Heart left ventricle (tissue), 16 donors: ENCODE measurements at regions of chr6 and their contacts with region 1.

Region 1: DNA sequence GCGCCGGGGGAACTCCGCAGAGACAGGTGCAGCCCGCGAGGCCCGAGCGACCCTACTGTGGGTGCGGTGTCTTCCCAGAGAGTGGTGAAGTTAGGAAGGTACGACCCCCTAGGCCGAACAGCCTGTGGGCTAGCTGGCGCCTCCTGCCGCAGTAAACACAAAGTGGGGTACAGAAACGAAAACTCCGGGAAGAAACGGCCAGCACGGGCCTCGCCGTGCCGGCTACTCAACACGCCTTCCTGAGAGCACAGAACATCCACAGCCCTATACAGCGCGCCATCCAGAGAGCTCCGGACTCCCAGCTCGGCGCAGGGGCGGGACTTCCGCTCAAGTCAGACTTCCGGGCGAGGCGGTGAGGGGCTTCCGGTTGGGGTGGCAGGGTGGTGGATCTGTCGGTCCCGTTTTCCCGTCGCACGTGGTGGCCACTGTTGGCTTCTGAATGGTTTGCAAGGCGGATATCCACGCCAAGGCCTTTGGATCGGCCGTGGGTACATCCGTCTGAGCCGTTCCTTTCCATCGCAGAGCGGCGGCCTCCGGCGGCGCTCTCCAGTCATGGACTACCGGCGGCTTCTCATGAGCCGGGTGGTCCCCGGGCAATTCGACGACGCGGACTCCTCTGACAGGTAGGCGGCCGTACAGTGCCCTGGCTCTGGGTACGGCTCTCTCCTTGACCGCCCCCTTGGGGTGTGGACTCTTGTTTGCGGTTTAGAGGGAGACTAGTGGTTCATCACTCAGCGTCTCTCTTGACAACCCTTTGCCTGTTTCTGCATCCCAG is at the starts of genes CAGE1 and RIOK1:
- DNase-seq: peak; percentile 95 to 97 (median 97)
- ATAC-seq: peak; percentile 100
- H3K4me3 ChIP-seq: peak within 1 kb of the TSS; percentile 56 to 96 (median 84)
- H3K27ac ChIP-seq: peak within 1 kb of the TSS; percentile 22 to 97 (median 92)
- H3K4me1 ChIP-seq: peaks cover 0 to 31% (median 18%) of the 10 kb centered on the region in 12 donors
- H3K27me3 ChIP-seq: no peaks in the 10 kb centered on the region
- CTCF ChIP-seq: peak in 6 of 12 donors; percentile 13 to 32 (median 20)
- POLR2A ChIP-seq: peak in 1 of 2 donors; percentile 79
- total RNA-seq, gene CAGE1: 0.54 TPM in 1 of 9 donors, not detected in the others
- total RNA-seq, gene RIOK1: 8.8 to 14.4 (median 9.7) TPM

Region 2: GRCh38 chr6:7058250-7058923 is 331.3 kb before region 1 on chr6:
- intact Hi-C with region 1: no loop called
- DNase-seq: peak in 1 of 5 donors; percentile 41
- ATAC-seq: peak in 3 of 4 donors; percentile 41 to 84 (median 79)
- H3K4me3 ChIP-seq: no peak overlapping the region
- H3K27ac ChIP-seq: no peak overlapping the region
- H3K4me1 ChIP-seq: peaks cover 0 to 7% (median 0%) of the 10 kb centered on the region in 12 donors
- H3K27me3 ChIP-seq: no peaks in the 10 kb centered on the region
- CTCF ChIP-seq: no peak
- POLR2A ChIP-seq: no peak

Region 3: DNA sequence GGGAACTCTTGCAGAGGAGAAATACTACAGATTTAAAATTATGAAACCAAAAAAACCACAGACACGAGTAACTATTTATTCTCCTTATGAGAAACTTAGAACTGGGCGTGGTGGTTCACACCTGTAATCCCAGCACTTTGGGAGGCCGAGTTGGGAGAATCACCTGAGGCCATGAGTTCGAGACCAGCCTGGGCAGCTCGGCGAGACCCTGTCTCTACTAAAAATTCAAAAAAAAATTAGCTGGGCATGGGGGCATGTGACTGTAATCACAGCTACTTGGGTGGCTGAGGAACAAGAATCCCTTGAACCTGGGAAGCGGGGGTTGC is 113.5 kb before region 1 on chr6:
- intact Hi-C with region 1: loop called in 4 of 10 experiments (anchors 5 to 10 kb)
- DNase-seq: no peak
- ATAC-seq: no peak
- H3K4me3 ChIP-seq: no peak overlapping the region
- H3K27ac ChIP-seq: no peak overlapping the region
- H3K4me1 ChIP-seq: peaks cover 0 to 17% (median 0%) of the 10 kb centered on the region in 12 donors
- H3K27me3 ChIP-seq: no peaks in the 10 kb centered on the region
- CTCF ChIP-seq: peak in 1 of 12 donors; percentile 1
- POLR2A ChIP-seq: no peak

Region 4: GRCh38 chr6:7282097-7282906 is 107.3 kb before region 1 on chr6:
- intact Hi-C with region 1: loop called in 4 of 10 experiments (anchors 5 to 10 kb)
- DNase-seq: no peak
- ATAC-seq: no peak
- H3K4me3 ChIP-seq: no peak overlapping the region
- H3K27ac ChIP-seq: peak overlapping the region in 1 of 12 donors; percentile 9
- H3K4me1 ChIP-seq: peaks cover 0 to 20% (median 0%) of the 10 kb centered on the region in 12 donors
- H3K27me3 ChIP-seq: no peaks in the 10 kb centered on the region
- CTCF ChIP-seq: no peak
- POLR2A ChIP-seq: no peak

Region 5: GRCh38 chr6:7292596-7293255 is 96.9 kb before region 1 on chr6:
- intact Hi-C with region 1: loop called in 2 of 10 experiments (anchors 10 kb)
- DNase-seq: no peak
- ATAC-seq: peak in 3 of 4 donors; percentile 62 to 90 (median 64)
- H3K4me3 ChIP-seq: no peak overlapping the region
- H3K27ac ChIP-seq: peak overlapping the region in 11 of 12 donors; percentile 2 to 68 (median 21)
- H3K4me1 ChIP-seq: peaks cover 0 to 7% (median 0%) of the 10 kb centered on the region in 12 donors
- H3K27me3 ChIP-seq: no peaks in the 10 kb centered on the region
- CTCF ChIP-seq: no peak
- POLR2A ChIP-seq: no peak

Region 6: GRCh38 chr6:7312616-7313504 is 76.8 kb before region 1 on chr6 and contains the start of gene SSR1:
- intact Hi-C with region 1: loop called (anchors 1 to 10 kb)
- DNase-seq: peak; percentile 98 to 99 (median 99)
- ATAC-seq: peak; percentile 100
- H3K4me3 ChIP-seq: peak within 1 kb of the TSS; percentile 78 to 100 (median 90)
- H3K27ac ChIP-seq: peak within 1 kb of the TSS; percentile 51 to 97 (median 94)
- H3K4me1 ChIP-seq: peaks cover 0 to 58% (median 21%) of the 10 kb centered on the region in 12 donors
- H3K27me3 ChIP-seq: no peaks in the 10 kb centered on the region
- CTCF ChIP-seq: peak in 1 of 12 donors; percentile 6
- POLR2A ChIP-seq: peak in 1 of 2 donors; percentile 89
- total RNA-seq, gene SSR1: 20.6 to 106 (median 67.9) TPM

Region 7: DNA sequence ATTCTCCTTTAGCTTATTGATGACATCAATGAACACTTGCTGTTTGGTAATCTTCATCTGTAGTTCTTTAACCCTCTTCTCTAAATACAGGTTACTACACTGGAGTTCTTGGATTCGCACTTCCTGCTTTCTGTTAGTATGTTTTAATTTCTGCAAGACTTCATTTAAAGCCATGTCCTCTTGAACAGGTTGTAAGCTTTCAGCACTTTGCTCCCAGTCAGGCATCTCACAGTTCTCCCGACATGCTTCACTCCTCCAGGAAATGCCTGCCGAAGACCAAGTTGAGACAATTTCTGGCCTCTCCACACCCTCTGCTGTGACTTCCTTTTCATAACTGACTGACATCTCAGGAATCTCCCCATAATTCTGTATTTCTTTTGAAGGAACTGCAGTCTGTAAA is 15.9 kb before region 1 on chr6:
- intact Hi-C with region 1: no loop called
- DNase-seq: no peak
- ATAC-seq: no peak
- H3K4me3 ChIP-seq: no peak overlapping the region
- H3K27ac ChIP-seq: no peak overlapping the region
- H3K4me1 ChIP-seq: no peaks in the 10 kb centered on the region
- H3K27me3 ChIP-seq: peaks cover 0 to 6% (median 0%) of the 10 kb centered on the region in 9 donors
- CTCF ChIP-seq: no peak
- POLR2A ChIP-seq: no peak

Region 8: DNA sequence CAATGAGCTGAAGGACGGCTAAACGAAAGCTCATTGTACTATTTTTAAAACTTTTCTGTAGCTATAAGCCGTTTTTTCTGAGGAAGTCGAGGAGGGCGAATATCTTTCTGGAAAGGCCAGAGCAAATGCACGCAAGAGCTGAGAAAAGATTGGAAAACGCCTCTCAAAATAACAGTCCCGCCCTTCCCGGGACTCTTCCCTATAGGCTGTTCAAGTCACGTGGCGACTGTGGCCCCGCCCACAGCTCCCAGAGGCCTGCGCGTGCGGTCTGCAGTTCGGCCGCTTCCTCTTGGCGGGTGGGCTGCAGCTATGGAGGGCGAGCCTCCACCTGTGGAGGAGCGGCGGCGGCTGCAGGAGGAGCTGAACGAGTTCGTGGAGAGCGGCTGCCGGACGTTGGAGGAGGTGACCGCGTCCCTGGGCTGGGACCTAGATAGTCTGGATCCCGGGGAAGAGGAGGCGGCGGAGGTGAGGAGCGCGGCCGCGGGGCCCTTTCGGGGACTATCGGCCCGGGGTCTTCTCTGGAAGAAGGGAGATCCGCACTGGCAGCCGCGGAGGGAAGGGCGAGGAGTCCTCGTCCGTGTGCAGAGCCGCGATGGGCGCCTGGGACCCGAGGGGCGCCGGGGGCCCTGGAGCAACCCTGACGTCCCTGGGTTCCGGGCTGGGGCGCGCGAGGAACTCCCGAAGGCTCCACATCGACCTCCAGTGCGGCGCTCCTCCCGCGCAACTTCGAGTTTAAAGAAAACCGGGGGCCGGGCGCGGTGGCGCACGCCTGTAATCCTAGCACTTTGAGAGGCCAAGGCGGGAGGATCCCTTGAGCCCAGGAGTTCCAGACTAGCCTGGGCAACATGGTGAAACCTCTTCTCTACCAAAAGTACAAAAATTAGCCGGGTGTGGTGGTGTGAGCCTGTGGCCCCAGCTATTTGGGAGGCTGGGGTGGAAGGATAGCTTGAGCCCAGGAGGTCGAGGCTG is 200.6 kb after region 1 on chr6 and contains the start of gene SNRNP48:
- intact Hi-C with region 1: loop called in 1 of 10 experiments (anchors 5 kb)
- DNase-seq: peak; percentile 95 to 97 (median 96)
- ATAC-seq: peak; percentile 98 to 99 (median 98)
- H3K4me3 ChIP-seq: peak within 1 kb of the TSS; percentile 64 to 99 (median 88)
- H3K27ac ChIP-seq: peak within 1 kb of the TSS; percentile 66 to 89 (median 80)
- H3K4me1 ChIP-seq: peaks cover 3 to 52% (median 32%) of the 10 kb centered on the region in 12 donors
- H3K27me3 ChIP-seq: no peaks in the 10 kb centered on the region
- CTCF ChIP-seq: peak in 1 of 12 donors; percentile 7
- POLR2A ChIP-seq: peak; percentile 22 to 80
- total RNA-seq, gene SNRNP48: 8.2 to 25.8 (median 13.3) TPM